Mucosa of descending colon (tissue), 3 donors: ENCODE measurements at regions of chr7 and their contacts with region 1.

Region 1: GRCh38 chr7:123865517-123866117 is 20.6 kb downstream of the HYAL4 start:
- DNase-seq: peak in 1 of 3 donors; percentile 85
- ATAC-seq: peak; percentile 75
- H3K4me3 ChIP-seq: no peak overlapping the region
- H3K4me1 ChIP-seq: peaks cover 12% of the 10 kb centered on the region
- CTCF ChIP-seq: peak; percentile 47

Region 2: DNA sequence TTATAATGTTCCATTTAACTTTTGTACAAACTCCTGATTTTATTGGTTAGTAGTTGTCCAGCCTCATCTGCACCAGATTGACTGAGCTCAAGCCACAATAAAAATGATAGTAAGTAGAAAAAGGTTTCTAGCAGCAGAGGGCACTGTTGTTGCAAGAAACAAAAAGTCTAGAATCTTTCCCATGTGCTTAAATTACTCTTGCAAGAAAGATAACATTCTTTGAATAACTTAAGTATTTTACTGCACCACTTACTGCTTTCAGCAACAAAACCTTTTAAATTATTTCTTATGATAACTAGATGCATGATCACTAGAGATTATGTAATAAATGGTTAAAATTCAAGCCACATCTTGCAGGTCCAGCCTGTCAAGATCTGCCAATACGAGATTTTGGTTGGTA is 182.9 kb before region 1 on chr7:
- intact Hi-C with region 1: loop called in 1 of 2 experiments (anchors 5 kb)
- DNase-seq: peak in 1 of 3 donors; percentile 79
- ATAC-seq: peak; percentile 64
- H3K4me3 ChIP-seq: no peak overlapping the region
- H3K4me1 ChIP-seq: no peaks in the 10 kb centered on the region
- CTCF ChIP-seq: no peak

Region 3: GRCh38 chr7:123695944-123696677 is 169.5 kb before region 1 on chr7:
- intact Hi-C with region 1: loop called in 1 of 2 experiments (anchors 5 kb)
- DNase-seq: no peak
- ATAC-seq: no peak
- H3K4me3 ChIP-seq: no peak overlapping the region
- H3K4me1 ChIP-seq: no peaks in the 10 kb centered on the region
- CTCF ChIP-seq: no peak

Region 4: GRCh38 chr7:123797673-123798527 is 67.7 kb before region 1 on chr7:
- intact Hi-C with region 1: loop called in 1 of 2 experiments (anchors 2 kb)
- DNase-seq: peak in 1 of 3 donors; percentile 38
- ATAC-seq: peak; percentile 91
- H3K4me3 ChIP-seq: no peak overlapping the region
- H3K4me1 ChIP-seq: peaks cover 13% of the 10 kb centered on the region
- CTCF ChIP-seq: no peak

Region 5: DNA sequence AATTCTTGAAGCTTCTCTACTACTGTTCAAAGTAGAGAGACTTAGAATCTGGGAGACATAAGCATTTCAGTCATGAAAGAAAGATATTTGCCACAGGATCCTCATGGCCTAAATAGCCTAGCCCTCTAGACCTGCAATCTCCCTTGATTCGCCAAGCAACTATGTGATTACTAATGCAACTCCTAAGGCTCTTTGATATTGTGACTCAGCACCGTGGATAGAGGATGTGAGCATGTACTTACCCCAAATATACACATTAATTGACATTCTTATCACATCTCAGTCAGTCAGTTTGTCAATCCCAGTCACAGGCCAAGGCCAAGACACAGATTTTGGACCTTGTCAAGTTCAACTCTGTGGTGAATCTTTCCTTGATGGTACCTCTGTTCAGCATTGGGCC is 857.4 kb after region 1 on chr7:
- intact Hi-C with region 1: no loop called
- DNase-seq: no peak
- ATAC-seq: peak; percentile 35
- H3K4me3 ChIP-seq: no peak overlapping the region
- H3K4me1 ChIP-seq: no peaks in the 10 kb centered on the region
- CTCF ChIP-seq: no peak